HEK293 (cell line): ENCODE measurements at regions of chr5 and their contacts with region 1.

Region 1: DNA sequence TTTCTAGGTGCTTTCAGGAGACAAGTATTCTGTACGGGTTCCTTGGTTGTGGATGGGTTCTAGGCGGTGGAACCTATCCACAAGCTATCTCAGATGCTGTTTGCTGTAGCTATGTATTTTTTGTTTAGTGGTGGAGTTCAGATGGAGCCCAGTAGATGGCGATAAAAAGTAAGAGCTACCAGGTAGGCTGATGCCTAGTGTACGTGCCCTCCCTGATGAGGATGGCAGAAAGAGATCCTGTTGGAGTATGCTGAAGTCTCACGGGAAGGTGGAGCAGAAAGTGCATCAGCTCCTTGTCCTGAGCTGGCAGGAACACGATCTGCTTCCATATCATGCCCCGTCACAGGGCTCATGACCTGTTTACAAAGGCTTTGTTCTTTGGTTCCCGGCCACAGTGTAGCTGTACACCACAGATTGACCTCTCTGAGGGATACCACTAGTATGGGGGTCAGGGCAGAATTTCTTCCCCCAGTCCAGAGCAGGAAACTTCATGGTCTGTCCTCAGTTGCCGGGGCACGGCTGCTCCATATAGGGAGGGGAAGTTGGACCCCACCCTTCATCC is 12.6 kb upstream of the UGT3A2 start:
- H3K4me3 ChIP-seq: no peak overlapping the region
- H3K27ac ChIP-seq: no peak overlapping the region
- H3K4me1 ChIP-seq: no peaks in the 10 kb centered on the region; the same call in 1 of the 2 replicates
- CTCF ChIP-seq: peak; percentile 66; the same call in 1 of the 2 replicates

Region 2: GRCh38 chr5:36060420-36060887 is 18.8 kb before region 1 on chr5:
- CTCF ChIA-PET with region 1: interaction called, 21 read pairs
- POLR2A ChIA-PET with region 1: no interaction called
- H3K4me3 ChIP-seq: no peak overlapping the region
- H3K27ac ChIP-seq: no peak overlapping the region
- H3K4me1 ChIP-seq: no peaks in the 10 kb centered on the region
- CTCF ChIP-seq: 0 out of 2 replicates have a peak, but pooled peaks have one; percentile 46

Region 3: GRCh38 chr5:36089989-36090564 is 10.8 kb after region 1 on chr5:
- CTCF ChIA-PET with region 1: interaction called, 29 read pairs
- POLR2A ChIA-PET with region 1: no interaction called
- H3K4me3 ChIP-seq: no peak overlapping the region
- H3K27ac ChIP-seq: no peak overlapping the region
- H3K4me1 ChIP-seq: no peaks in the 10 kb centered on the region
- CTCF ChIP-seq: no peak

Region 4: GRCh38 chr5:36151434-36152323 is 72.4 kb after region 1 on chr5 and contains the starts of genes LMBRD2 and SKP2:
- CTCF ChIA-PET with region 1: interaction called, 13 read pairs
- POLR2A ChIA-PET with region 1: interaction called, 7 read pairs
- H3K4me3 ChIP-seq: peak within 1 kb of the TSS; percentile 90
- H3K27ac ChIP-seq: peak within 1 kb of the TSS; percentile 74
- H3K4me1 ChIP-seq: peaks cover 11% of the 10 kb centered on the region
- CTCF ChIP-seq: peak; percentile 44; the same call in 1 of the 2 replicates

Region 5: DNA sequence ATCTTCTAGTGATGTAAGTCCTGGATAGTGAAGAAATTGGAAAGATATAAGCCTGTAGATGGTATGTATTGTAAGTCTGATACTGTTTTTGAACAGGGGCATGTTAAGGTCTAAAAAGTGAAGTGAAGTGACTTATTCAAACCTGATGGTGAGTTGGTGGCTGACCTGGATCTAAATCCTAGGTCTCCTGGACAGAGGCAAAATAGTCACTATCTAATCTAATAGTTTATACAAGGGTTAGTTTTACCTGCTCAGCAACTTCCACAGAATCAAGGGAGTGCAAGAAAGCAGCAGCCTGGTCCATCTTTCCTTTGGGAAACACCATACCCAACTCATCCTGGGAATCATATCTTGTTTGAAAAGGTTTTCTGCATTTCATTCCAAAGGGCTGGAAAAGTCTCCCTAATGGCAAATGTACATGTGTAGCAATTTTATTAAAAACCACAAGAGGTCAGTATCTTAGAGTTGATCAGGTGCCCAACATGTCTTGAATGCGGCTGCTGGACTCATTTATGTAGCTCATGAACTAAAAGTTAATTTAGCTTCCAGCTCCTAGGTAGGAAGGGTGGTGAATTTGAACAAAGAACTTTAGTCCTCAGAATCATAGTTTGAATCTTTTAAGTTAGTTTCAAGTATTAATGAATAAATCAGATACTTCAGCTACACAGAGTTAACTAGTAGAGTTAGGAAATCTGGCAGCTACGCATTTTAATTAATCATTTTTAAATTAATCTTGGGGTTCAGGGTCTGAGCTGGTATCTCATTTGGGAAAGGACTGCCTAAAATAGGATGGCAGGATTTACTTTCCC is 98.6 kb after region 1 on chr5:
- CTCF ChIA-PET with region 1: interaction called, 15 read pairs
- POLR2A ChIA-PET with region 1: no interaction called
- H3K4me3 ChIP-seq: no peak overlapping the region
- H3K27ac ChIP-seq: no peak overlapping the region
- H3K4me1 ChIP-seq: no peaks in the 10 kb centered on the region
- CTCF ChIP-seq: peak; percentile 39; the same call in 1 of the 2 replicates

Region 6: GRCh38 chr5:36200513-36200912 is 121.2 kb after region 1 on chr5:
- CTCF ChIA-PET with region 1: no interaction called
- POLR2A ChIA-PET with region 1: no interaction called
- H3K4me3 ChIP-seq: no peak overlapping the region
- H3K27ac ChIP-seq: no peak overlapping the region
- H3K4me1 ChIP-seq: no peaks in the 10 kb centered on the region
- CTCF ChIP-seq: no peak

Region 7: DNA sequence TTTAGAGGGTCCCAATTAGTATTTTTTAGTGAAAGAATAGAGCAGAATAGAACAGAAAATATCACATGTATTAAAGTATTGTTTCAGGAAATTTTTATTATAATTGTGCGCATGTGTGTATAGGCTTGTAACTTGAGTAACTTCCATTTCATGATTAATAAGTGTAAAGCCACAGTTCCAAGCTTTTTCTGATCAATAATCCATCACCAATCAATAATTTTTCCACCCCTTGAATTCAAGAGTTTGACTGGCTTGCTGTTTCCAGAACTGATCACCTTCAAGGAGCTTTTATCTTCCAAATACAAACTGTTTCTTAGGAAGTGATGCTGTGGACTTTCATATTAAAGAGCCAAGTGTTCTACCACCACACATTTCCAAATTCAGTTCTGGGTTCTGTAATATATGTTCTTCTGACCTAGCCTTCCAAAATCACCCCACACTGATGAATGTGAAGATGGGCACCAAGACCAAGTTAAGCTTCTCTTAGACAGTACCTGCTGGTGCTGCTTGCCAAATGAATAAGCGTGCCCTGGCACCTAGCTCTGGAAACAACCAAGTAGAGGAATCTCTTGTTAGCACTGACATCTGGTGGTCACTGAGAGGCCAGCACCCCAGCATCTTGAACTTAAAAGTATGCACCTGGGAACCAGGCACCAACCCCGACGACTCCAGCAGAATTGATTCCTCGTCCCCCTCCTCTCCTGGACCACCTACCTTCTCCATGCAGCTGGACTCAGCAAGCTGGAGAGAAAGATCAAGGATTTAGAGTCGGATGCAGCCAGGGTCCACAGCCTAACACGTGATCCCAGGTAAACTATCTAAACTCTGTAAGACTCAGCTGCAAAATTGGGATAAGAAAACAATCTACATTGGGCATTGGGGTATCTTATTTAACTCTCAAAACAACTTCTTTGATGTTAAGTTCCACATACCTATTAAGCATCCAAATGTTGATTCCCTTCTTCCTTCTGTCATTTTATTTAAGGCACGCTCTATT is 616.7 kb after region 1 on chr5:
- CTCF ChIA-PET with region 1: interaction called, 21 read pairs
- POLR2A ChIA-PET with region 1: no interaction called
- H3K4me3 ChIP-seq: no peak overlapping the region
- H3K27ac ChIP-seq: no peak overlapping the region
- H3K4me1 ChIP-seq: no peaks in the 10 kb centered on the region
- CTCF ChIP-seq: peak; percentile 68